ENCODE measurements at regions of chr7 and their contacts with region 1.

Region 1: GRCh38 chr7:123748734-123749536 is at the start of gene WASL:
- DNase-seq: peak; percentile 82 to 98 (median 90)

Region 2: DNA sequence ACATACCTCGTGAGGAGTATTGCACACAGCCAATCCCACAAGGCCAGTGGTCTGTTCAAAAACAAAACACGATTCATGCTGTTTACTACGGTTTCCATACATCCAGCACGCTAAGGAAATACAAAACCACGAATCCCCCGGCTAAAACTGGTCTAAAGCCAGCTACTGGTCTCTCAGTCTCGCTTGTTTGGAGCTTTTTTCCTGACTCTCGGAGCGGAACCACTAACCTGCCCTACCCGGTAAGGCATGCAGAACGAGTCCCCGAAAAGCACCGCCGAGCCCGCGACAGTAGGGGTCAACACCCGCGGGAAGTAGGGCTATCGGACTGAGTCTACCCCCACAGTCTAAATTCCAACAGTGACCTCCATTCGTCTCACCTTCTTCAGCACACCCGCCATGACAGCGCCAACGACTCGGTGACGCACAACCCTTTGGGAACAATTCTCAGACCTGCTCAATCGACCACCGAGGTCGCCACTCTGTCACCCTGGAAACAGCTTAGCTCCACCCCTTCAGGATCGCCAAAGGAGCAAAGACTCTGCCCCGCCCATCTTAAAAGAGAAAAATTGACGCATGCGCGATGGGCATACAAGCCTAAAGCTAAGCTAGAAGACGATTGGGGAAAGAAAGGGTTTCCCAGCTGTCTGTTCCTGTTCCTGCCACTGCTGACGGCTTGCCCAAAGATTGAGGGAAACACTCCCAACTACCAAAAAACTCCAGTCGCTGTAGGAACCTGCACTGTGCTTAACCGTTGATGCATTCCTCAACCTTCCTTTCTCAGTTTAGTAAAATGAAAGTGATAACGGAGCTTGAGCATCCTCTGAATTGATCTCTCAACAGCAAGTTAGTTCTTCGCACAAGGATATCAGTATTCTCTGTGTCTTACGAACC is 191.3 kb before region 1 on chr7 and contains the start of gene NDUFA5:
- intact Hi-C with region 1: loop called (anchors 10 kb)
- DNase-seq: peak; percentile 95 to 99 (median 97)

Region 3: DNA sequence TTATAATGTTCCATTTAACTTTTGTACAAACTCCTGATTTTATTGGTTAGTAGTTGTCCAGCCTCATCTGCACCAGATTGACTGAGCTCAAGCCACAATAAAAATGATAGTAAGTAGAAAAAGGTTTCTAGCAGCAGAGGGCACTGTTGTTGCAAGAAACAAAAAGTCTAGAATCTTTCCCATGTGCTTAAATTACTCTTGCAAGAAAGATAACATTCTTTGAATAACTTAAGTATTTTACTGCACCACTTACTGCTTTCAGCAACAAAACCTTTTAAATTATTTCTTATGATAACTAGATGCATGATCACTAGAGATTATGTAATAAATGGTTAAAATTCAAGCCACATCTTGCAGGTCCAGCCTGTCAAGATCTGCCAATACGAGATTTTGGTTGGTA is 66.2 kb before region 1 on chr7:
- intact Hi-C with region 1: loop called (anchors 5 kb)
- DNase-seq: no peak

Region 4: GRCh38 chr7:123709525-123709924 is 39.4 kb before region 1 on chr7:
- intact Hi-C with region 1: loop called (anchors 5 kb)
- DNase-seq: no peak